ENCODE measurements at regions of chr1 and their contacts with region 1.

Region 1: GRCh38 chr1:95043141-95043980 is 29.4 kb downstream of the ALG14 start:
- DNase-seq: peak; percentile 79 to 83 (median 80)
- ATAC-seq: peak; percentile 59 to 89 (median 84)
- H3K4me3 ChIP-seq: no peak overlapping the region
- H3K27ac ChIP-seq: peak overlapping the region in 9 of 12 donors; percentile 2 to 80 (median 53)
- H3K4me1 ChIP-seq: peaks cover 0 to 19% (median 15%) of the 10 kb centered on the region in 12 donors
- H3K27me3 ChIP-seq: no peaks in the 10 kb centered on the region
- CTCF ChIP-seq: peak; percentile 95 to 99 (median 98)
- POLR2A ChIP-seq: no peak

Region 2: GRCh38 chr1:94514095-94514727 is 529.1 kb before region 1 on chr1:
- intact Hi-C with region 1: loop called in 1 of 10 experiments (anchors 10 kb)
- DNase-seq: no peak
- ATAC-seq: peak in 3 of 4 donors; percentile 31 to 63 (median 34)
- H3K4me3 ChIP-seq: no peak overlapping the region
- H3K27ac ChIP-seq: no peak overlapping the region
- H3K4me1 ChIP-seq: peaks cover 0 to 4% (median 0%) of the 10 kb centered on the region in 12 donors
- H3K27me3 ChIP-seq: no peaks in the 10 kb centered on the region
- CTCF ChIP-seq: peak; percentile 39 to 67 (median 60)
- POLR2A ChIP-seq: no peak

Region 3: DNA sequence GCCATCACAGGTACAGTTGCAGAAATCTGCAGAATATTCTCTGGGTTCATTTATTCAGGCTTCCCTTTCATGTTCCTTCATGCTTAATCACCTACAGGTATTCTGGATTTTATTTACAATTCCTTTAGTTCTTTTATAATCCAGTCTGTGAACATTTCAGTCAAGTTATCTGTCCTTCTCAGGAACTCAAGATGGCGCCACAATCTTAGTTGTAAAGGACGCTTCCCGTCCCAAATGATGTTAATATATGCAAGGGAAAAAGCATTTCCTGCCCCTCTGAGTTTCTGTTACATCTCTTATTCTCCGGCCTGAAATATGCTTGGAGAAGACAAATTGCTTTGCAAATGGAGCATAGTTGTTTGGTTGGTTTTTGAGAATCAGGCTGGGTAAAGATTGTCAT is 521.1 kb before region 1 on chr1:
- intact Hi-C with region 1: loop called in 6 of 10 experiments (anchors 5 to 10 kb)
- DNase-seq: no peak
- ATAC-seq: peak in 2 of 4 donors; percentile 55 to 64
- H3K4me3 ChIP-seq: no peak overlapping the region
- H3K27ac ChIP-seq: no peak overlapping the region
- H3K4me1 ChIP-seq: peaks cover 0 to 7% (median 0%) of the 10 kb centered on the region in 12 donors
- H3K27me3 ChIP-seq: no peaks in the 10 kb centered on the region
- CTCF ChIP-seq: peak in 11 of 12 donors; percentile 21 to 70 (median 54)
- POLR2A ChIP-seq: no peak

Region 4: DNA sequence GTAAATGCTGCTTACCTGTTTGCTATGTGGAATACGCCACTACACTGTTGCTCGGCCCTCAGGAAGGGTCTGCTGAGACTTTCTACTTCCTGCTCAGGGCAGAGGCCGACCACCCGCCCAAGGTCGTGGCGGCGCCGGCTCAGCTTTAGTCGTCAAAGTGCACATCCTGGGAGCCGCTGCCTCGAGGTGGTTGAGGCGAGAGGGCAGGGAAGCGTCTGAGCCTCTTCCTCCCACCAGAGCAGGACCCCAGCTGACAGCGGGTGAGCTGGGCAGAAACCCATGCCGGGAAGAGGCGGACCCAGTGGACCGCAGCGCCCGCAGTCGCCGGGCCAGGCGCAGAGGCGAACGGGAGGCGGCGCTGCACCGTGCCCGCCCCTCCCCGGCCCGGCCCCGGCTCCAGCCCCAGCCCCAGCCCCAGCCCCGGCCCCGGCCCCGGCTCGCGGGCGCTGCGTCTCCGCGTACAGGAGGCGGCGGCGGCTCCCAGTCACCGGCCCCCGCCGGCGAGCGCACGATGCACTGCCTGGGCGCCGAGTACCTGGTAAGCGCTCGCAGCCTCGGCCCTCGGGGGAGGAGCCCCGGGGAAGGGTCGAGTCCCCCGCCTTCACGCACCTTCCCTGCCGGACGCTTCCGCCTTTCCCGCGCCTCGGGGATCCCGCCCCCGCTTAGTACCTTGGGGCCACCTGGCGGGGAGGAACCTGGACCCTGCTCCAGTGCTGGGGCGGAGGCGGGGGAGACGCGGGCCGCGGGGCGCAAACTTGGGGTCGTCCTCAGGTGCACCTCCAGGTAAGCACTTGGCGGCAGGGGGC is 223.2 kb before region 1 on chr1 and contains the start of gene SLC44A3:
- intact Hi-C with region 1: loop called in 1 of 10 experiments (anchors 1 kb)
- DNase-seq: peak; percentile 44 to 77 (median 52)
- ATAC-seq: peak; percentile 66 to 95 (median 92)
- H3K4me3 ChIP-seq: peak within 1 kb of the TSS; percentile 27 to 88 (median 64)
- H3K27ac ChIP-seq: peak within 1 kb of the TSS in 7 of 12 donors; percentile 36 to 78 (median 54)
- H3K4me1 ChIP-seq: peaks cover 0 to 24% (median 6%) of the 10 kb centered on the region in 12 donors
- H3K27me3 ChIP-seq: peaks cover 0 to 34% (median 0%) of the 10 kb centered on the region in 9 donors
- CTCF ChIP-seq: peak in 8 of 12 donors; percentile 17 to 53 (median 40)
- POLR2A ChIP-seq: no peak
- total RNA-seq, gene SLC44A3: 2.7 to 8.8 (median 5.9) TPM

Region 5: GRCh38 chr1:94854458-94855306 is 188.7 kb before region 1 on chr1:
- intact Hi-C with region 1: loop called (anchors 1 to 2 kb)
- DNase-seq: peak; percentile 84 to 90 (median 87)
- ATAC-seq: peak; percentile 89 to 95 (median 94)
- H3K4me3 ChIP-seq: peak overlapping the region in 11 of 12 donors; percentile 10 to 59 (median 50)
- H3K27ac ChIP-seq: peak overlapping the region in 10 of 12 donors; percentile 12 to 79 (median 70)
- H3K4me1 ChIP-seq: peaks cover 0 to 43% (median 17%) of the 10 kb centered on the region in 12 donors
- H3K27me3 ChIP-seq: no peaks in the 10 kb centered on the region
- CTCF ChIP-seq: peak; percentile 79 to 97 (median 90)
- POLR2A ChIP-seq: peak in 1 of 2 donors; percentile 27

Region 6: DNA sequence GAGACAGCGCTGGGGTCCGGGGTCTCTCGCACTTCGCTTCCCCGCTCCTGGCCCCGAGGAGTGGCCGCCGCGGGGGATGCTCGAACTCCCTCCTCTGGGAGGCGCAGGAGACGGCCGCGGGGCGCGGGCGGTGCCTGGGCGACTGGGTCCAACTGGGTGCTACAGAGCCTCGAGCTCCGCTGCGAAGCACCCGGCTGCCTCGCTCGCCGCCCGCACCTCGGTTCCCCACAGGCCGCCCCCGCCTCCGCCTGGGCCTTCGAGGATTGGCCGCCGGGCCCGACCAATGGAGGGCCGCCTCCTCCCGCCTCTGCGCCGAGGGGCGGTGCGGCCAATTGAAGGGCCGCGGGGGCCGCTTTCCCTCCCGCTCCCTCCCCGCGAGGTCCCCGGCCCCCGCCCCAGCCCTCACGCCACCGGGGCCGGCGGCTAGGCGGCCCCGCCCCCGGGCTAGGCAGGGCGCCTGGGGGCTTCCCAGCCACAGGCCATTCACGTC is 116.4 kb before region 1 on chr1 and contains the start of gene CNN3:
- intact Hi-C with region 1: loop called in 9 of 10 experiments (anchors 1 to 10 kb)
- DNase-seq: peak; percentile 94 to 96 (median 95)
- ATAC-seq: peak; percentile 92 to 96 (median 94)
- H3K4me3 ChIP-seq: peak within 1 kb of the TSS; percentile 69 to 95 (median 80)
- H3K27ac ChIP-seq: peak within 1 kb of the TSS; percentile 95 to 100 (median 97)
- H3K4me1 ChIP-seq: peaks cover 8 to 59% (median 43%) of the 10 kb centered on the region in 12 donors
- H3K27me3 ChIP-seq: peaks cover 0 to 24% (median 0%) of the 10 kb centered on the region in 9 donors
- CTCF ChIP-seq: no peak
- POLR2A ChIP-seq: peak; percentile 76 to 98
- total RNA-seq, gene CNN3: 53.0 to 115 (median 74.1) TPM

Region 7: DNA sequence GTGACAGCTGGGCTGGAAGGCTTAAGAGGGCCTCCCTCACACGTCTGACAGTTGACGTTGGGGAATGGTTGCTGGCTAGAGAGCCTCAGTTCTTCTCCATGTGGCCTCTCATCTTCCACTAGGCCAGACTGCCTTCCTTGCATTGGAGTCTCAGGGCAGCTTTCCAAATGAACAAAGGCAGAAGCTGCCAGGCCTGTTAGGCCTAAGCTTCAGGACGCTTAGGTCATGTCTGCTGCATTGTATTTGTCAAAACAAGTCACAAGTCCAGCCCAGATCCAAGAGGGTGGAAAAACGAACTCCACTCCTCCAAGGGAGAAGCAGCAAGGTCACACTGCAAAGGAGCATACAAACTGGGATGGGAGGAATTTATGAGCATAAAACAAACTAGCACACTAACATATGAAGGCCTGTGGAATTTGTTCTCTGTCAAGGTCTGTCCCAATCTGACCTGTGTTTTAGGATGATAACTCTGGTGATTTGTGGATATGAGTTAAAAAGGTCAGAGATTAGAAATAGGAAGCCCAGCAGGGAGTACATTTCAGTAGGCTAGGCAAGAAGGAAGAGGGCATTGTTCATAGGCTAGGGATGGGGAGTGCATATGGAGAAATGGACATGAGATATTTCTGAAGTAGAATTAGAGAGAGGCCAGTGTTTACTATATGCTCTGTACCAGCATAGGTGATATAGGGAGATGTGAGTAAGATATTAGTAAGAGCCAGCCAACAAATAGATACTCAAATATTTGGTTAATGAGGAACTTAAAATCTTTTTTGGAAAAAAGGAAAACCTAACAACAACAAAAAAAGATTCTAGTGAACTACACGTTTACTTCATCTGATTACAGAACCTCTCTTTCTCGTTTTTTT is 87.4 kb before region 1 on chr1:
- intact Hi-C with region 1: loop called in 2 of 10 experiments (anchors 5 to 10 kb)
- DNase-seq: peak in 4 of 5 donors; percentile 52 to 70 (median 64)
- ATAC-seq: peak; percentile 72 to 90 (median 86)
- H3K4me3 ChIP-seq: no peak overlapping the region
- H3K27ac ChIP-seq: peak overlapping the region in 11 of 12 donors; percentile 37 to 85 (median 66)
- H3K4me1 ChIP-seq: peaks cover 6 to 40% (median 28%) of the 10 kb centered on the region in 12 donors
- H3K27me3 ChIP-seq: no peaks in the 10 kb centered on the region
- CTCF ChIP-seq: no peak
- POLR2A ChIP-seq: no peak

Region 8: GRCh38 chr1:95084317-95085176 is 41.2 kb after region 1 on chr1:
- intact Hi-C with region 1: no loop called
- DNase-seq: no peak
- ATAC-seq: peak in 3 of 4 donors; percentile 9 to 65 (median 61)
- H3K4me3 ChIP-seq: no peak overlapping the region
- H3K27ac ChIP-seq: peak overlapping the region in 8 of 12 donors; percentile 28 to 83 (median 66)
- H3K4me1 ChIP-seq: peaks cover 0 to 32% (median 13%) of the 10 kb centered on the region in 12 donors
- H3K27me3 ChIP-seq: no peaks in the 10 kb centered on the region
- CTCF ChIP-seq: peak; percentile 35 to 63 (median 52)
- POLR2A ChIP-seq: no peak